ENCODE measurements at regions of chr3 and their contacts with region 1.

Region 1: DNA sequence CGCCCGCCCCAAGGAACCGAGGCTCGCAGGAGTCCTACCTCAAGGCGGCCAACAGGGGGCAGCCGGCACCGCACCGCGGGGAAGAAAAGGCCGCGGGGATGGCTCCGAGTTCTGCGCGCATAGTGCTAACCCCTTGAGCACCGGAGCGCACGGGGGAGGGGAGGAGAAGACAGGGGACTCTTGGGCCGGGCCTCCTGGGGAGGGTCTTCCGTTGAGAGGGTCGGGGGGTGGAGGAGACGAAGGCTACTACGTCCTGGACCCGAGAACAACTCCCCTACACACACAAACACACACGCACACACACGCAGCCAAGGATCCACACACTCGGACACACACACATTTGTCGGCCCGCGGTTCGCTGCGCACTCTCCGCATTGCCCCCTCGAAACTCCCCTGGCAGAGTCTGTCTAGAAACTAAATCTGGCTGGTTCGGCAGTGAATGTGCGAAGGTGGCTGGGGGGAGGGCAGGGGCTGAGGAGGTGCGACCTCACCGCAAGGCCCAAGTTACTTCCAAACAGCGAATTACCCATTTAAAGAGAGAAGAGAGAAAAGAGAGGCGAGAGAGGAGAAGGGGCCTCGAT is 1.8 kb downstream of the WNT5A start:
- DNase-seq: peak; percentile 84
- ATAC-seq: peak; percentile 77

Region 2: DNA sequence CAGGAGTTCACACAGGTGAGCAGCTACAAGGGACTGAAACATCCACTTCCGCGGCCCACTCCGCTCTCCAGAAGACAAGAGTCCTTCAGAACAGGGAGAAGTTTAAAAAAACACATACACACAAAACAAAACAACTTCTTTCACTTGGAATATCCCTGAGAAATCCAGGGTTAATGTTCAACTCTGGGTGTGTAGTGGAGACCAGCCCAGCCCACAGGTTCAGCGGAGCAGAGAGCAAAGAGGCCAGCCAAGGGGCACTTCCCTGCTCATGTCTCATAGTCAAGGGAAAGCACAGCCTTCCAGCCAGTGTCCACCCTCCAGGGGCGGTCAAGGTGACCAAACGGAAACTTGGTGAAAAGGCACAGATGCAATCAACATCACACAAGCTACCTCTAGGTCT is 39.8 kb before region 1 on chr3:
- intact Hi-C with region 1: no loop called
- DNase-seq: no peak
- ATAC-seq: no peak

Region 3: GRCh38 chr3:55718521-55718921 is 233.2 kb after region 1 on chr3:
- intact Hi-C with region 1: loop called (anchors 5 kb)
- DNase-seq: no peak
- ATAC-seq: no peak

Region 4: GRCh38 chr3:56042326-56042951 is 557.1 kb after region 1 on chr3:
- intact Hi-C with region 1: loop called (anchors 5 kb)
- DNase-seq: no peak
- ATAC-seq: peak; percentile 82

Measured in Right ventricle myocardium superior (tissue), 1 donor.